ENCODE measurements at regions of chr4 and their contacts with region 1.

Region 1: GRCh38 chr4:103008875-103009729 is 10.4 kb downstream of the SLC9B1 start:
- DNase-seq: peak in 1 of 4 donors; percentile 51
- ATAC-seq: peak; percentile 59
- H3K4me3 ChIP-seq: no peak overlapping the region
- H3K27ac ChIP-seq: no peak overlapping the region
- H3K4me1 ChIP-seq: peaks cover 25% of the 10 kb centered on the region
- H3K27me3 ChIP-seq: no peaks in the 10 kb centered on the region
- CTCF ChIP-seq: peak; percentile 37 to 93 (median 87)
- POLR2A ChIP-seq: no peak

Region 2: DNA sequence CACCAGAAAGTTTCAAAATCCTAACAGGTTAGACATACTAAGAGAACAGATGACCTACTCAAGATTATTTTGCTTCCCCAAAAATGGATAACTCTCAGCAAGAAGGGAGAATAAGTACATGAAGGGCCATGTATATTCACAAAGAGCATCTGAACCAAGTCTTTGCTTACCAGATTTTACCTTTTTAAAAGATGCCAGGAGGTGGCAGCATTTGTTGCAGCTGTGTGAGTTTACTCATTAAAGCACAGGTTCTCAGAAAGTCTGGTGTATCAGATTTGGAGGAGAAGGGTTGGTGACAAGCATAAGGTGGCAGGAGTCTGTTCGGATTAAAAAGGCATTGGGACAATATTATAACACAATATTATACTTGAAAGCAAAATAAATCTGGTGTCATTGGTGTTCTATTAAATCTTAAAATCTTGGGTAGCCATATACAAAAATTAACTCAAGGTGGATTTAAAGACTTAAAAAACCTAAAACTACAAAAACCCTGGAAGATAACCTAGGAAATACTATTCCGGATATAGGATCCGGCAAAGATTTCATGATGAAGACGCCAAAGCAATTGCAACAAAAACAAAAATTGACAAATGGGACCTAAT is 559.2 kb before region 1 on chr4:
- intact Hi-C with region 1: loop called (anchors 10 kb)
- DNase-seq: peak; percentile 43 to 69 (median 50)
- ATAC-seq: peak; percentile 66
- H3K4me3 ChIP-seq: no peak overlapping the region
- H3K27ac ChIP-seq: no peak overlapping the region
- H3K4me1 ChIP-seq: no peaks in the 10 kb centered on the region
- H3K27me3 ChIP-seq: no peaks in the 10 kb centered on the region
- CTCF ChIP-seq: peak; percentile 36 to 78 (median 73)
- POLR2A ChIP-seq: no peak

Region 3: DNA sequence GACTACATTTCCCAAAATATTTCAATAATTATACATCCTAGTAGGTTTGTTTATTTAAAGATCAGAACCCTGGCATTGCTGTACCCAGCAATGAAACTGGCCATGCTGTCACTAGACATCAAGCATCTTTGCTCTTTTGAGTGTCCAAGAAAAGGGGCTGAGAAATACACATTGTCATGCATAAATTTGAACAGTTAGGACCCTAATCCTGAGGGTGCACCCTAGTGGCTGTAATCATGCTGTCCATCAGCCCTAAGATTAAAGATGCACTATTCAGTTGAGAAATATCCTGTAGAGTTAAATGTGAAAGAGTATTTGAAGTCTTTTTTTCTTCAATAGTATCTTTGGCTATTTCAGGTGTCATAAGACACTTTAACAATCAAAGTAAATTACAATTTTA is 399.1 kb before region 1 on chr4:
- intact Hi-C with region 1: loop called (anchors 5 kb)
- DNase-seq: no peak
- ATAC-seq: no peak
- H3K4me3 ChIP-seq: no peak overlapping the region
- H3K27ac ChIP-seq: no peak overlapping the region
- H3K4me1 ChIP-seq: no peaks in the 10 kb centered on the region
- H3K27me3 ChIP-seq: no peaks in the 10 kb centered on the region
- CTCF ChIP-seq: no peak
- POLR2A ChIP-seq: no peak

Region 4: GRCh38 chr4:103144926-103145325 is 135.8 kb after region 1 on chr4:
- intact Hi-C with region 1: no loop called
- DNase-seq: no peak
- ATAC-seq: no peak
- H3K4me3 ChIP-seq: no peak overlapping the region
- H3K27ac ChIP-seq: no peak overlapping the region
- H3K4me1 ChIP-seq: no peaks in the 10 kb centered on the region
- H3K27me3 ChIP-seq: no peaks in the 10 kb centered on the region
- CTCF ChIP-seq: no peak
- POLR2A ChIP-seq: no peak

Region 5: DNA sequence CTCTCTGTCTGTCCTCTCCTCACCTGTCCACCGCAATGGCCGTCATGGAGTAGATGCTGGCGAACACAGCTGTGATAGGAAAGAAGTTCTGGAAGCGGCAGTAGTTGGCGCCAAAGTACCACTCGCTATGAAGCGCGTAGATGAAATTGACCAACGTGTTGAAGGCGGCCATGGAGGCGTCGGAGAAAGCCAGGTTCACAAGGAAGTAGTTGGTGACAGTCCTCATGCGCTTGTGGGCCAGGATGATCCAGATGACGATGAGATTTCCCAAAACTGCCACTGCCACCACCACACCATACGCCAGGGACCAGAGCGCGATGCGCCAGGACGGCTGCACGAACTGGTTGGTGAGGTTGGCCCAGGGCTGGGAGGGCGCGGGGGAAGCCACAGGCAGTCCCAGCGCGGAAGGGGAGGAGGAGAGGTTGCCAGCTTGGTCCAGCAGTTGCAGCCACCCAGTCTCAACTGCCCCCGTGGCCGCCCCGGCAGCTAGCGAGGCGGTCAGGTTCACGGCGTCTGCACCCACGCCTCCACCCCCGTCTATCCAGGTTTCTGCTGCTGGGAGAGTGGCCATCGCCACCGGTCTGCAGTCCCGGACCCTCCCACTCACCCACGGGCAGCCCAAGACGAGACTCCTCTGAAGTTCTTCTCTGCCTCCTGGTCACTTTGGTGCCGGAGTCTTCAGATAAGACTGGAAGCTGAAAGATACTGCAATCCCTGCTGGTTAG is 710.2 kb after region 1 on chr4:
- intact Hi-C with region 1: no loop called
- DNase-seq: peak in 2 of 4 donors; percentile 17 to 22
- ATAC-seq: no peak
- H3K4me3 ChIP-seq: no peak overlapping the region
- H3K27ac ChIP-seq: no peak overlapping the region
- H3K4me1 ChIP-seq: peaks cover 11% of the 10 kb centered on the region
- H3K27me3 ChIP-seq: no peaks in the 10 kb centered on the region
- CTCF ChIP-seq: no peak
- POLR2A ChIP-seq: no peak